K562 (cell line): ENCODE measurements at regions of chr11 and their contacts with region 1.

Region 1: GRCh38 chr11:75014129-75014528 is 25.4 kb downstream of the NEU3 start:
- DNase-seq: peak in 2 of 4 experiments; percentile 45 to 49
- ATAC-seq: peak; percentile 71
- H3K4me3 ChIP-seq: no peak overlapping the region
- H3K27ac ChIP-seq: peak overlapping the region; percentile 19; the same call in 2 of the 3 replicates
- H3K4me1 ChIP-seq: peaks cover 0 to 24% of the 10 kb centered on the region in 2 experiments; a peak in 2 of 5 replicates
- H3K27me3 ChIP-seq: no peaks in the 10 kb centered on the region
- CTCF ChIP-seq: peak in 2 of 3 experiments; percentile 25 to 36; a peak in 2 of 6 replicates
- EP300 ChIP-seq: no peak
- POLR2A ChIP-seq: no peak
- RAD21 ChIP-seq: 0 out of 4 replicates have a peak, but pooled peaks of 1 of the 2 experiments have one; percentile 8

Region 2: GRCh38 chr11:73693899-73694525 is 1320.1 kb before region 1 on chr11:
- CTCF ChIA-PET with region 1: no interaction called
- POLR2A ChIA-PET with region 1: no interaction called
- in situ Hi-C with region 1: loop called (anchors 5 kb)
- intact Hi-C with region 1: no loop called
- DNase-seq: no peak
- ATAC-seq: no peak
- H3K4me3 ChIP-seq: no peak overlapping the region
- H3K27ac ChIP-seq: no peak overlapping the region
- H3K4me1 ChIP-seq: no peaks in the 10 kb centered on the region
- H3K27me3 ChIP-seq: no peaks in the 10 kb centered on the region
- CTCF ChIP-seq: no peak
- EP300 ChIP-seq: no peak
- POLR2A ChIP-seq: no peak
- RAD21 ChIP-seq: no peak

Region 3: DNA sequence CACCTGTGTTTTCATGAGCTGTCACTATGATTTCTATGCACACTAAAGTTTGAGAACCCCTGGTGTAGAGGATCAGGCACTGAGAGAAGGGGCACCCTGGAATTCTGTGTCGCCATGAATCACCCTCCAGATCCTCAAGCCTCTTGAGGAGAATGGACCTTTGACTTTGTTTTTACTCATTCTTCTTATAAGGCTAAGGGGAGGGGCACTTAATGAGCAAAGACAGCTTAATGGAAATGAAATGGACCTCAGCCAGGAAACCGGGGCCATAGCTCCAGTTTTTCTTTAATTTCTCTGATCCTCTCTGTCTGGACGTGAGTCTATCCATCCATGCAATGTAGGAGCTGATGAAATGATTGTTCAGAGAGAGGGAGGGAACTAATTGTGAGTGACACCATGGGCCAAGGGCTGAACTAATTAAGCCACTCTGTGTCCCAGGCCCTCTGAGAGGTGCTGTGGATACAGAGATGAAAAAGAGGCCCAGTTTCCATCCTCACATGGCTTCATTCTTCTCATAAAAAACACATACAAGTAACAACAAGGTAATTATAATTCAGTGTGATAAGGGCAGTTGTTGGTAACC is 49.7 kb after region 1 on chr11:
- CTCF ChIA-PET with region 1: no interaction called
- POLR2A ChIA-PET with region 1: no interaction called
- in situ Hi-C with region 1: no loop called
- intact Hi-C with region 1: no loop called
- DNase-seq: no peak
- ATAC-seq: peak; percentile 67
- H3K4me3 ChIP-seq: no peak overlapping the region
- H3K27ac ChIP-seq: no peak overlapping the region
- H3K4me1 ChIP-seq: peaks cover 0 to 13% of the 10 kb centered on the region in 2 experiments; a peak in 3 of 5 replicates
- H3K27me3 ChIP-seq: no peaks in the 10 kb centered on the region
- CTCF ChIP-seq: no peak
- EP300 ChIP-seq: no peak
- POLR2A ChIP-seq: no peak
- RAD21 ChIP-seq: no peak

Region 4: DNA sequence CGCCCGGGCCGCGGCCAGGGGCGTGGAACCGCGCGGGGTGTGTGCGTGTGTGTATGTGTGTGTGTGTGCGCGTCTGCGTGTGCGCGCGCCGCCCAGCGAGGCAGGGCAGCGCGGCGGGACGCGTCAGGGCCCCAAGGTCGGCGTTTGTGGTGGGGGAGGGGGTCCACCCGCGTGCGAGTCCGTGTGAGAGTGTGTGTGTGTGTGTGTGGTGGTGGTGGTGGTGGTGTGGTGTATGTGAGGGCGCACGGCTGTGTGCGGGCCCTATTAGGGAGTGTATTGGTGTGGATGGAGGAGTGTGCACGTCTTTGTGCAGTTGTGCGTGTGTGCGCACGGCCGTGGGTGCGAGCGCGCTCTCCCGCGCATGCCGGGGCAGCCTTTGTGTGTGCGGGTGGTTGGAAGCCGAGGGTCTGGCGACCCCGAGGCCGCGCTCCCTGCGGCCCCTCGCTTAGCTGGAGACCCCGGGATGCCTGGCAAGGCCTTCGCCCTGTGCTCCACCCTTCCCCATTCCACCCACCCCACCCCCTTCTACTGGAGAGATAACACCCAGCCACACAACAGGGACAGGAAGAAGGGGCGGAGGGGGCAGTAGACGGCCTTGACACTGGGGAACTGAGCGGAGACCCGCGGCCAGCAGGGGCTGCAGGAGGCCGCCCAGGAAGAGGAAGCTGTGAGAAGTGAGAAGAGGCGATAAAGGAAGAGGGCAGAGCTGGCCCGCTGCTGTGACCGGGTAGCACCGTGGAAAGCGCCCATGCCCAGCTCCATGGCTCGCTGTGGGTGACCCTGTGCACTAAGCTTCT is 337.9 kb after region 1 on chr11:
- CTCF ChIA-PET with region 1: no interaction called
- POLR2A ChIA-PET with region 1: no interaction called
- in situ Hi-C with region 1: no loop called
- intact Hi-C with region 1: no loop called
- DNase-seq: peak; percentile 83 to 93 (median 88)
- ATAC-seq: peak; percentile 85
- H3K4me3 ChIP-seq: peak overlapping the region; percentile 69
- H3K27ac ChIP-seq: peak overlapping the region; percentile 81
- H3K4me1 ChIP-seq: peaks cover 43 to 49% of the 10 kb centered on the region in 2 experiments
- H3K27me3 ChIP-seq: no peaks in the 10 kb centered on the region
- CTCF ChIP-seq: peak; percentile 62 to 75 (median 68); a peak in 5 of 6 replicates
- EP300 ChIP-seq: peak; percentile 36; the same call in 1 of the 2 replicates
- POLR2A ChIP-seq: peak; percentile 73; the same call in 1 of the 2 replicates
- RAD21 ChIP-seq: peak; percentile 50 to 69